AG04450 (cell line): ENCODE measurements at regions of chr4 and their contacts with region 1.

Region 1: GRCh38 chr4:110840221-110840654 is 217.4 kb upstream of the PITX2 start:
- DNase-seq: peak; percentile 13
- H3K4me3 ChIP-seq: no peak overlapping the region
- H3K27ac ChIP-seq: no peak overlapping the region
- H3K27me3 ChIP-seq: no peaks in the 10 kb centered on the region
- CTCF ChIP-seq: no peak

Region 2: GRCh38 chr4:110597582-110597981 is 242.7 kb before region 1 on chr4:
- CTCF ChIA-PET with region 1: no interaction called
- POLR2A ChIA-PET with region 1: no interaction called
- DNase-seq: no peak
- H3K4me3 ChIP-seq: no peak overlapping the region
- H3K27ac ChIP-seq: no peak overlapping the region
- H3K27me3 ChIP-seq: no peaks in the 10 kb centered on the region
- CTCF ChIP-seq: no peak

Region 3: DNA sequence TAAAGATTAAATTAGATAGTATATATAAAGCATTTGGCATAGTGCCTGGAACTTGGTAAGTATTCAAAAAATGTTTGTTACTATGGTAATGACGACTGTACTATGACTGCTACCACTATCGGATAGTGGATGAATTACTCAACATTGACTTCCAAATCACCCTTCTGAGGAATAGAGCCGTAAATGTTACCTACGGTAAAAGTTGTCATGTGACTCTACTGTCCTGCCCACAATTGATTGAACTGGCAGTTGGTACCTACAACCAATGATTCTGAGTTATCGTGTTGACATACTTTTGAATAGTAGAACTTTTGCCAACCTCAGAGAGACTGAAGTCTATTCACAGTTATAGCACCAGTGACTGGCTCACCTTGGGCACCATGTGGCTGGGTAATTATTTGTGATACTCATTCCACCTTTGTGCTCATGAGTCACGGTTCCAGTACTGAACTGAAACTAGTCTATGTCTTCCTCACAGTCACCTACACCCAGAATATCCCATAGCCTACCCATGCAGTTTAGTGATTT is 31.8 kb before region 1 on chr4:
- CTCF ChIA-PET with region 1: no interaction called
- POLR2A ChIA-PET with region 1: no interaction called
- DNase-seq: no peak
- H3K4me3 ChIP-seq: no peak overlapping the region
- H3K27ac ChIP-seq: no peak overlapping the region
- H3K27me3 ChIP-seq: no peaks in the 10 kb centered on the region
- CTCF ChIP-seq: no peak

Region 4: DNA sequence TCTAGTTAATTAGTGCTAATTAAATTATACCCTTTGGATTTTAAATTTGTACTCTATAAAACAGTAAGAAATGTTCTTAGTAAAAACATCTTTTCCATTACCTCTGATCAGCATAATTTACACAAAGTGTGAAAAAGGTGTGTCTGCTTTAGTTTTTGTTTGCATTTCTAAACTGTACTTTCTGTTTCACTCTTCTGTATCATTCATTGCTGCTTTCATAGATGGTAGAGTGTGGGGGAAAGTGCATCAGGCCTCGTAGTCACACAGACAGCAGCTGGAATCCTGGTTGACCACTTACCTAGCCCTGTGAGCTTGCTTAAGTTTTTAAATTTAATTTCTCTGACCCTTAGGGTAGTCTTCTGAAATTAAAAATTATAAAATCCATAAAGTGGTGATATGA is 58.1 kb after region 1 on chr4:
- CTCF ChIA-PET with region 1: no interaction called
- POLR2A ChIA-PET with region 1: no interaction called
- DNase-seq: no peak
- H3K4me3 ChIP-seq: no peak overlapping the region
- H3K27ac ChIP-seq: no peak overlapping the region
- H3K27me3 ChIP-seq: no peaks in the 10 kb centered on the region
- CTCF ChIP-seq: no peak

Region 5: GRCh38 chr4:111572470-111572869 is 732.2 kb after region 1 on chr4:
- CTCF ChIA-PET with region 1: interaction called, 12 read pairs
- POLR2A ChIA-PET with region 1: no interaction called
- DNase-seq: no peak
- H3K4me3 ChIP-seq: no peak overlapping the region
- H3K27ac ChIP-seq: no peak overlapping the region
- H3K27me3 ChIP-seq: no peaks in the 10 kb centered on the region
- CTCF ChIP-seq: no peak